WTC11 (cell line): ENCODE measurements at regions of chr3 and their contacts with region 1.

Region 1: DNA sequence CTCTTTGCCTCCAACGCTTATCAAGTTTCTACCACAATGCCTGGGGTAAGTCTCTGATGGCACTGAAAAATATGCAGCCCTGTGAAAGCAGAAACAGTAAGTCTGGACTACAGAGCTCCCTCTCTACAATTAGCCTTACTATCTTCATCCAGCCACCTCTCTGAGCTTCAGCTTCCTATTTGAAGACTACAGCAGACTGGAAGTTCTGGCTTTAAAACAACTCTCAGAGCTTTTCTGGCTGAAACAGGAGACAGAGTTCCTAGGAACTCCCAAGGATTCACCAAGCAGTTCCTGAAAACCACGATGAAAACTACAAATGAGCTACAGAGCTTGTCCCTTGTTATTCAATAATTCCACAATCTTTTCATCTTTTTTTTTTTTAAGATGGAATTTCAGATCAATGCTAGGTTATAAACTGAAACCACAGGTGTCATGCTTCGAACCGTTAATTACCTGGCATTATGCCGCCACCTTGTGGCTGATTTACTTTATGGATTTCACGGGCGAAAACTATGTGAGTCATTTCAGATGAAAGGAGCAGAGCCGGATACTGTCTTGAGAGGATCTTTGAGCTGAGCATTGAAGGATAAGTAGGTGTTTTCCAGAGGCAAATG is 3.9 kb downstream of the CRYGS start:
- DNase-seq: peak; percentile 75
- ATAC-seq: peak; percentile 86
- H3K4me3 Mint-ChIP-seq: no peak overlapping the region
- H3K27ac Mint-ChIP-seq: peak overlapping the region; percentile 22
- H3K4me1 Mint-ChIP-seq: peaks cover 6% of the 10 kb centered on the region
- H3K27me3 Mint-ChIP-seq: no peaks in the 10 kb centered on the region
- CTCF ChIP-seq: peak; percentile 40; the same call in 1 of the 2 replicates

Region 2: GRCh38 chr3:185983495-185984141 is 556.7 kb before region 1 on chr3:
- CTCF ChIA-PET with region 1: interaction called, 11 read pairs
- POLR2A ChIA-PET with region 1: no interaction called
- DNase-seq: peak; percentile 82
- ATAC-seq: peak; percentile 89
- H3K4me3 Mint-ChIP-seq: peak overlapping the region; percentile 55
- H3K27ac Mint-ChIP-seq: no peak overlapping the region
- H3K4me1 Mint-ChIP-seq: peaks cover 3% of the 10 kb centered on the region; the same call in 1 of the 2 replicates
- H3K27me3 Mint-ChIP-seq: peaks cover 10% of the 10 kb centered on the region; the same call in 1 of the 2 replicates
- CTCF ChIP-seq: peak; percentile 88

Region 3: DNA sequence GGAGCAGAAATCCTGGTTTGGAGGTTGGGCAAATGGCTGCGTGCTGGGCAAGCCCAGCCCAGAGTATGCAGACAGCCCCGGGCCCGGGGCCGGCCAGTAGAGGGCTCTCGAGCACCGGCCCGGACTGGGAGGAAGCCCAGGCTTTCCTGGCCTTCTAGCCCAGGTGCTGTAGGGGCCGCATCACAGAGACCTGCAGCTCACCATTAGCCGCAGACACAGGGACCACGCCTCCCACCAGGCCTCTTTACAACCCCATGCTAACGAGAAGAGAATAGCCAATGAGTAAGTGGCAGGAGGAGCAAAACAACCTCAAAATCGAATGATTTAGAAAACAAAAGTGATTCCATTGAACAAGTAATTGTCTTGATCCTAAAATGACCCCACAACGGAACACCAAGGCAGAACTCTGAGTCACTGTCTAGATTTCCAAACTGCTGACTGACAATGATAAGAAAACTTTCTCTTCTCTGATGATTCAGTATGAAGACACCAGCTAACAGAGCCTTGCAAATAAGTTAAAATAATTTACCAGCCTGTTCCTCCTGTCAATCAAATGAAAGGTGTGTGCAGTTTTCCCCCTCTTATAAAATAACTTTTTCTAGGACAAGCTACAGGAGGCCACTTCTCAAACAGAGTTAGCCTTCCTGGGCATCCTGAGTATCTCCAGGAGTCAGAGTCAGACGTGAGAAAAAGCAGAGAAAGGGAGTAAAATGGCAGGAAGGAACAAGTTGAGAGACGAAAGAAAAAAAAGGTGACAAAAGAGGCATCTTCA is 280.5 kb before region 1 on chr3:
- CTCF ChIA-PET with region 1: interaction called, 117 read pairs
- POLR2A ChIA-PET with region 1: interaction called, 4 read pairs
- DNase-seq: peak; percentile 91
- ATAC-seq: peak; percentile 98
- H3K4me3 Mint-ChIP-seq: peak overlapping the region; percentile 41; the same call in 1 of the 2 replicates
- H3K27ac Mint-ChIP-seq: peak overlapping the region; percentile 32; the same call in 1 of the 2 replicates
- H3K4me1 Mint-ChIP-seq: peaks cover 27% of the 10 kb centered on the region
- H3K27me3 Mint-ChIP-seq: no peaks in the 10 kb centered on the region; the same call in 1 of the 2 replicates
- CTCF ChIP-seq: no peak; the same call in 1 of the 2 replicates

Region 4: DNA sequence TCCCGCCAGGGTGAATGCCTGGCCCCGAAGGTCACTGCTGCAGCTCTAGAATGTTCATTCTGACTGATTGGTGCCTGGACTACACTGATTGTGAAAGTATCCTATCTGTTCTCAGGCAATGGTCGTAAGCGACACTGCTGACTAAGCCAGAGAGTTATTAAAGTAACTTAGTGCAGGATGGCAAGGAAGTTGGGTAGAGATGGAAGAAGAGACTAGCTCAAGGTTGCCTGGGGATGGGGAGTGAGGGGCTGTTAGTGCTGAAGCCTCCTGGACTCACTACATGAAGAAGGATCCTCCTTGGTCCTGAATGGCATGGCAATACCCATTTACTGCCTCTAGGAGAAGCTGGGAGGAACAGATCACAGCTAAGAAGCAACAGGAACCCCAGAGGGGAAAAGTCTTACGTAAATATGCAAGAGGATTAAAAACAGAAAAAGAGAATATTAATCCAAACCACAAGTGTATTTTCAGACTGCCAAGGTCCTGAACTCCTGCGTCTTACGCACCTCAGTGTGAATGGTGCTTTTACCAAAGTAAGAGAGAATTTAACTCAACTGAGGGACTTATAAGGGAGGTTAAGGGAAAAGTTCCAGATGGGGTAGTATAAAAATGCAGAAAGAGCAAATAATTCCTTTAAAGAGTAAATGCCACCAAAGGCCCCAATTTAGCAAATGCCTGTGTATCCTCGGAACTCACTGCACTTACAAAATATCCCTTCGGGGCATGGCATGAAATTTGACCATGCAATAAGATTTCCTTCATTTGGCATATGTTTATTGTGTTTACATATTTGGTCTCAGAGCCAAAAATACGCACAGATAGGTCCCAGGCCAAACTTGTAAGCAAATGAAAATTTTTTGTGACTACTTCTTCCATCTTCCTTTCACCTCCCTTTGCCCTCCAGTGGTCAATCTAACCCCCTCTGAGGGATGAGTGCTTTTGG is 114.3 kb before region 1 on chr3:
- CTCF ChIA-PET with region 1: interaction called, 10 read pairs
- POLR2A ChIA-PET with region 1: no interaction called
- DNase-seq: no peak
- ATAC-seq: peak; percentile 92
- H3K4me3 Mint-ChIP-seq: no peak overlapping the region
- H3K27ac Mint-ChIP-seq: 0 out of 2 replicates have a peak overlapping the region, but pooled peaks have one; percentile 17
- H3K4me1 Mint-ChIP-seq: peaks cover 27% of the 10 kb centered on the region
- H3K27me3 Mint-ChIP-seq: no peaks in the 10 kb centered on the region
- CTCF ChIP-seq: no peak; the same call in 1 of the 2 replicates

Region 5: GRCh38 chr3:186570096-186570940 is 30.0 kb after region 1 on chr3 and contains the start of gene DNAJB11:
- CTCF ChIA-PET with region 1: interaction called, 15 read pairs
- POLR2A ChIA-PET with region 1: no interaction called
- DNase-seq: peak; percentile 99
- ATAC-seq: peak; percentile 89
- H3K4me3 Mint-ChIP-seq: peak within 1 kb of the TSS; percentile 88
- H3K27ac Mint-ChIP-seq: peak within 1 kb of the TSS; percentile 98
- H3K4me1 Mint-ChIP-seq: peaks cover 31% of the 10 kb centered on the region
- H3K27me3 Mint-ChIP-seq: no peaks in the 10 kb centered on the region
- CTCF ChIP-seq: no peak
- total RNA-seq, gene DNAJB11: 44.2 to 56.3 TPM (median 47.8 TPM) in 3 replicates